ENCODE measurements at regions of chr6 and their contacts with region 1.

Region 1: GRCh38 chr6:105484238-105485161 is 81.6 kb upstream of the PREP start:
- DNase-seq: no peak
- ATAC-seq: peak; percentile 64
- H3K4me3 ChIP-seq: no peak overlapping the region
- H3K27ac ChIP-seq: peak overlapping the region; percentile 8; the same call in 1 of the 2 replicates
- H3K4me1 ChIP-seq: peaks cover 50% of the 10 kb centered on the region
- H3K27me3 ChIP-seq: no peaks in the 10 kb centered on the region
- CTCF ChIP-seq: peak; percentile 80 to 84 (median 82)
- EP300 ChIP-seq: peak in 1 of 2 experiments; percentile 50; a peak in 2 of 4 replicates
- POLR2A ChIP-seq: no peak
- RAD21 ChIP-seq: peak; percentile 96

Region 2: DNA sequence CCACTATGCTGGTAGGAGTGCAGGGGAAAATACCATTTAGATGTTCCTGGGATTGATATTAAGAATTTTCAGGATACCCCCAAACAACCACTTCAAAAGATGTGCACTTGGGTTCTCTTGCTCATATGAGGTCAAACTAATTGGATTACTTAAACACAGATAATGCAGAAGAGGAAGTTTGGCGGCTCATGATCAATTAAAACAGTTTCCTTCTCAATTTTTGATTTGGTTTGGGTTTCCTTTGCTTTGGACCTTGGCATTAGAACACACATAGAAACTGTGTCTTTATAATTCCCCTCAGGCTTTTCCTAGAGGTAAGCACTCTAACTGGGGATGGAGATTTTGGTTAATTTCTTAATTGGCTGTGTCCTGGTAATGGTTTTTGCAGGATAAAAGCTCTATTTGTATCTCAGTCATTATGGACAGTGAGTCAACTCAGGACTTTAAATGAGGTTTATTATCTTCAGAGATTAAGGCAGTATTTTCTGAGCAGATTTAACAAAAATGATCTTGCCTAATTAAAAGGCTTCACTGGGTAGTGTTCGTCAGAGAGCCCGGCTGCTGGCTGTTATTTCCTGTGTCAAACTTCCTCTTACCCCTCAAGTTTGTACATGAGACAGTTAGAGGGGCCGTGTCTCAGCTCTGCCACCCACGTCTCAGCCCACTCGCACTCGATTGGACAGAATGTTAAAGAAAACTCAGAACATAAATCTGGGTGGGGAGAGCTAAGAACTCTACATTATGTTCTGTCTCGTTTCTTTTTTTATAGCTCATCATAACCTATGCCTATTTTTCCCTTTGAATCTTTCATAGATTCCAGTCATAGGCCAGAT is 31.4 kb before region 1 on chr6:
- CTCF ChIA-PET with region 1: interaction called, 95 read pairs
- POLR2A ChIA-PET with region 1: interaction called, 47 read pairs
- RAD21 ChIA-PET with region 1: interaction called, 184 read pairs
- SMC1A ChIA-PET with region 1: interaction called, 95 read pairs
- in situ Hi-C with region 1: no loop called
- intact Hi-C with region 1: loop called (anchors 2 kb)
- DNase-seq: peak; percentile 54
- ATAC-seq: peak; percentile 89
- H3K4me3 ChIP-seq: no peak overlapping the region
- H3K27ac ChIP-seq: peak overlapping the region; percentile 35
- H3K4me1 ChIP-seq: peaks cover 15% of the 10 kb centered on the region
- H3K27me3 ChIP-seq: no peaks in the 10 kb centered on the region
- CTCF ChIP-seq: no peak
- EP300 ChIP-seq: peak; percentile 49 to 63; a peak in 3 of 4 replicates
- POLR2A ChIP-seq: no peak
- RAD21 ChIP-seq: no peak

Region 3: GRCh38 chr6:105474234-105474633 is 10.3 kb before region 1 on chr6:
- CTCF ChIA-PET with region 1: interaction called, 6 read pairs
- POLR2A ChIA-PET with region 1: interaction called, 6 read pairs
- RAD21 ChIA-PET with region 1: interaction called, 7 read pairs
- SMC1A ChIA-PET with region 1: interaction called, 11 read pairs
- in situ Hi-C with region 1: no loop called
- intact Hi-C with region 1: no loop called
- DNase-seq: no peak
- ATAC-seq: no peak
- H3K4me3 ChIP-seq: no peak overlapping the region
- H3K27ac ChIP-seq: no peak overlapping the region
- H3K4me1 ChIP-seq: no peaks in the 10 kb centered on the region; the same call in 1 of the 2 replicates
- H3K27me3 ChIP-seq: no peaks in the 10 kb centered on the region
- CTCF ChIP-seq: no peak
- EP300 ChIP-seq: no peak
- POLR2A ChIP-seq: no peak
- RAD21 ChIP-seq: no peak

Region 4: DNA sequence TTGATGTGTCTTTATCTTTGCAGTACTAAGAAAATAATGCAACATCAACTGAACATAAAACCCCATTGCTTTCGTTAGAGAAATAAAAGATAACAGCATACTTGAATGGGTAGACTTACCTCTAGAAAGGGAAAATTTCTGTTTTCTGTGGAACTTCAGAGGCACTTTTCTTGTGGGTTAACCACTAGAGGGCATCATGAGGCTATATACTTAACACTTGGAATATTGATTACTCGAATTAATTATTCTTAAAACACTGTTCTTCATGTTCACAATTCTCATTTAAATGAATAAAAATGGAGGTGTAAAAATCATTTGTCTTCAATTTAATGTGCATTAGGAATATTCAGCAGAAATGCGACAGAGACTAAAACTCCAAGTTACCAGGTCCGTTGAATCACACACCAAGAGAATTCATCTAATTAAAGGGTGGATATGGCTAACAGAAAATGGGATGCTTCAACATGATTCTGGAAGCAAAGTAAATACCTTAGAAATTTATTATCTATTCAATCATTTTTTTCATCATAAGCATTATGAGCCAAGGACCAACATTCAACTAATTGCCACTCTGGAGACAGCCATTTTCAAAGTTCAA is 249.2 kb after region 1 on chr6:
- CTCF ChIA-PET with region 1: interaction called, 9 read pairs
- POLR2A ChIA-PET with region 1: interaction called, 5 read pairs
- RAD21 ChIA-PET with region 1: interaction called, 3 read pairs
- SMC1A ChIA-PET with region 1: interaction called, 9 read pairs
- in situ Hi-C with region 1: no loop called
- intact Hi-C with region 1: loop called (anchors 2 kb)
- DNase-seq: no peak
- ATAC-seq: peak; percentile 41; the same call in 1 of the 3 replicates
- H3K4me3 ChIP-seq: no peak overlapping the region
- H3K27ac ChIP-seq: no peak overlapping the region
- H3K4me1 ChIP-seq: no peaks in the 10 kb centered on the region
- H3K27me3 ChIP-seq: no peaks in the 10 kb centered on the region
- CTCF ChIP-seq: peak; percentile 48 to 52 (median 50); a peak in 5 of 6 replicates
- EP300 ChIP-seq: no peak
- POLR2A ChIP-seq: no peak
- RAD21 ChIP-seq: peak; percentile 56

Region 5: GRCh38 chr6:105814745-105815536 is 330.4 kb after region 1 on chr6:
- CTCF ChIA-PET with region 1: no interaction called
- POLR2A ChIA-PET with region 1: no interaction called
- RAD21 ChIA-PET with region 1: no interaction called
- SMC1A ChIA-PET with region 1: no interaction called
- in situ Hi-C with region 1: no loop called
- intact Hi-C with region 1: no loop called
- DNase-seq: no peak
- ATAC-seq: no peak
- H3K4me3 ChIP-seq: no peak overlapping the region
- H3K27ac ChIP-seq: no peak overlapping the region
- H3K4me1 ChIP-seq: no peaks in the 10 kb centered on the region
- H3K27me3 ChIP-seq: no peaks in the 10 kb centered on the region
- CTCF ChIP-seq: no peak
- EP300 ChIP-seq: no peak
- POLR2A ChIP-seq: no peak
- RAD21 ChIP-seq: no peak

Region 6: GRCh38 chr6:105992315-105992961 is 507.9 kb after region 1 on chr6:
- CTCF ChIA-PET with region 1: interaction called, 3 read pairs
- POLR2A ChIA-PET with region 1: no interaction called
- RAD21 ChIA-PET with region 1: no interaction called
- SMC1A ChIA-PET with region 1: interaction called, 4 read pairs
- in situ Hi-C with region 1: no loop called
- intact Hi-C with region 1: loop called (anchors 10 kb)
- DNase-seq: peak; percentile 45
- ATAC-seq: peak; percentile 98
- H3K4me3 ChIP-seq: peak overlapping the region; percentile 79
- H3K27ac ChIP-seq: no peak overlapping the region
- H3K4me1 ChIP-seq: peaks cover 5% of the 10 kb centered on the region; the same call in 1 of the 2 replicates
- H3K27me3 ChIP-seq: peaks cover 12 to 22% of the 10 kb centered on the region in 2 experiments
- CTCF ChIP-seq: no peak
- EP300 ChIP-seq: no peak
- POLR2A ChIP-seq: no peak; the same call in 1 of the 2 replicates
- RAD21 ChIP-seq: no peak

Region 7: DNA sequence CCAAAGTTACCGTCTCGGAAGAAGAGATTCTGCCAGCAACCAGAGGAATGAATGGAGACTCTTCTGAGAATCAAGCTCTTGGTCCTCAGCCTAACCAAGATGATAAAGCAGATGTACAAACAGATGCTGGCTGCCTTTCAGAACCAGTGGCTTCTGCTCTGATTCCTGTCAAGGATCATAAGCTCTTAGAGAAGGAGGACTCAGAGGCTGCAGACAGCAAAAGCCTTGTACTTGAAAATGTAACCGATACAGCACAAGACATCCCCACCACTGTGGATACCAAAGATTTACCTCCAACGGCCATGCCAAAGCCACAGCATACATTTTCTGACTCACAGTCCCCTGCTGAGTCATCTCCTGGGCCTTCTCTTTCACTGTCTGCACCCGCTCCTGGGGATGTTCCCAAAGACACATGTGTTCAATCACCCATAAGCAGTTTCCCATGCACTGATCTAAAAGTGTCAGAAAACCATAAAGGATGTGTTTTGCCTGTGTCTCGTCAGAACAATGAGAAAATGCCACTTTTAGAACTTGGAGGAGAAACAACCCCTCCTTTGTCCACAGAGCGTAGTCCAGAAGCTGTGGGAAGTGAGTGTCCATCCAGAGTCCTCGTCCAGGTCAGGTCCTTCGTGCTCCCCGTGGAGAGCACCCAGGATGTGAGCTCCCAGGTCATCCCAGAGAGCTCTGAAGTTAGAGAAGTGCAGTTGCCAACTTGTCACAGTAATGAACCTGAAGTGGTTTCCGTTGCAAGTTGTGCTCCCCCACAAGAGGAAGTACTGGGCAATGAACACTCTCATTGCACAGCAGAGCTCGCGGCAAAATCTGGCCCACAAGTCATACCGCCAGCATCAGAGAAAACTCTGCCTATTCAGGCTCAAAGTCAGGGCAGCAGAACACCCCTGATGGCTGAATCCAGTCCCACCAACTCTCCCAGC is 1035.2 kb after region 1 on chr6:
- CTCF ChIA-PET with region 1: no interaction called
- POLR2A ChIA-PET with region 1: no interaction called
- RAD21 ChIA-PET with region 1: no interaction called
- SMC1A ChIA-PET with region 1: no interaction called
- in situ Hi-C with region 1: no loop called
- intact Hi-C with region 1: loop called (anchors 5 kb)
- DNase-seq: peak; percentile 89
- ATAC-seq: peak; percentile 66
- H3K4me3 ChIP-seq: peak overlapping the region; percentile 73
- H3K27ac ChIP-seq: peak overlapping the region; percentile 93
- H3K4me1 ChIP-seq: no peaks in the 10 kb centered on the region
- H3K27me3 ChIP-seq: no peaks in the 10 kb centered on the region
- CTCF ChIP-seq: no peak
- EP300 ChIP-seq: peak; percentile 61 to 72
- POLR2A ChIP-seq: peak; percentile 78
- RAD21 ChIP-seq: no peak

Measured in GM12878 (cell line).